AG04449 (cell line): ENCODE measurements at regions of chr13 and their contacts with region 1.

Region 1: DNA sequence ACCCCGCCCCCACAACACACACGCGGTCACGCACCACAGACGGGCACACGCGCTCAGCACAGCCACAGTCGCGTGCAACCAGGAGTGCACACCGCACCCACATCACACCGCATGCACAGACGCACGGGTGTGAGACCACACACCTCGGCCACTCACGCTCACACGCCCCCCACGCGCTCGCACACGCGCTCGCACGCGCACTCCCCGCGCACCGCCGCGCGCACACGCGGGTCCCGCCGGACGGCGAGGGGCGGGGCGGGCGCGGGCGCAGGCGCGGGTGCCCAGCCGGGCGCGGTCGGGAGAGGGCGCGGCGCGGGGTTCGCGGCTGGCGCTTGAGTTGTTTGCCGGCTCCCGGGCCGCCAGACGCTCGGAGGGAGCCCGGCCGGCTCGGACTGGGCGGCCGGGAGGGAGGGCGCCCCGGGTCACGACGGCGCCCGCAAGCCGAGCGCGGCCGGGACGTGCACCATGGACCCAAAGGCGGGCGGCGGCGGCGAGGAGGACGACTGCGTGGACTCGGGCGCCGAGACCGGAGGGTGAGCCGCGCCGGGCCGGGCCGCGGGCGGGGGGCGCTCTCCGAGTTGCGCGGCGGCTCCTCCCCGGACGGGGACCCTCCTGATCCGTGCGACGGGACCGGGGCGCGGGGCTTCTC is at the start of gene FAM124A:
- DNase-seq: no peak
- H3K4me3 ChIP-seq: peak within 1 kb of the TSS; percentile 63
- CTCF ChIP-seq: peak; percentile 11

Region 2: GRCh38 chr13:51235756-51236490 is 13.8 kb after region 1 on chr13:
- CTCF ChIA-PET with region 1: interaction called, 12 read pairs
- POLR2A ChIA-PET with region 1: no interaction called
- DNase-seq: no peak
- H3K4me3 ChIP-seq: no peak overlapping the region
- CTCF ChIP-seq: no peak